Vagina (tissue), 2 donors: ENCODE measurements at regions of chr10 and their contacts with region 1.

Region 1: DNA sequence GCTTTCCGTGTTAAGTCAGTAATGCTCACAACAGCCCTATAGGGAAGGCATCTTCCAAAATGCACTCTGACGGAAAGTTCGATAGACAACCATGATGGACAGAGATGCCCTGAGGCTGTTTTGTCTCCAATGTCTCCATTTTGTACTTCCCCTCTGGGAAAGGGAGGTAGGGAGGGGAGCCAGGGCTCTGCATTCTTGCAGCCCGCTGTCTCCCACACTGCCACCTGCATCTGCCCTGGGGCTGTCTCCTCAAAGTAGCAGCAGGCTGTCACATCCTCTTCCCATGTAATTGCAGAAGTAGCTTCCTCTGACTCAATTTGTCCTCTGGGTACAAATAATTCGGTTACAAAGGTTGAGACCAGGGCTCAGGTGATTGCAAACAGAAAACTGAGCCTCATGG is 131.4 kb downstream of the GPAM start:
- DNase-seq: no peak
- H3K4me3 ChIP-seq: no peak overlapping the region
- H3K27ac ChIP-seq: no peak overlapping the region
- H3K4me1 ChIP-seq: no peaks in the 10 kb centered on the region
- H3K27me3 ChIP-seq: no peaks in the 10 kb centered on the region
- CTCF ChIP-seq: no peak
- POLR2A ChIP-seq: no peak

Region 2: GRCh38 chr10:112490545-112490944 is 438.4 kb after region 1 on chr10:
- intact Hi-C with region 1: no loop called
- DNase-seq: no peak
- H3K4me3 ChIP-seq: no peak overlapping the region
- H3K27ac ChIP-seq: no peak overlapping the region
- H3K4me1 ChIP-seq: peaks cover 10% of the 10 kb centered on the region
- H3K27me3 ChIP-seq: no peaks in the 10 kb centered on the region
- CTCF ChIP-seq: no peak
- POLR2A ChIP-seq: no peak

Region 3: GRCh38 chr10:113412161-113412560 is 1360.0 kb after region 1 on chr10:
- intact Hi-C with region 1: loop called (anchors 5 kb)
- DNase-seq: no peak
- H3K4me3 ChIP-seq: no peak overlapping the region
- H3K27ac ChIP-seq: no peak overlapping the region
- H3K4me1 ChIP-seq: no peaks in the 10 kb centered on the region
- H3K27me3 ChIP-seq: no peaks in the 10 kb centered on the region
- CTCF ChIP-seq: no peak
- POLR2A ChIP-seq: no peak

Region 4: GRCh38 chr10:113425541-113425972 is 1373.4 kb after region 1 on chr10:
- intact Hi-C with region 1: no loop called
- DNase-seq: no peak
- H3K4me3 ChIP-seq: no peak overlapping the region
- H3K27ac ChIP-seq: no peak overlapping the region
- H3K4me1 ChIP-seq: peaks cover 5% of the 10 kb centered on the region
- H3K27me3 ChIP-seq: no peaks in the 10 kb centered on the region
- CTCF ChIP-seq: no peak
- POLR2A ChIP-seq: no peak